IMR-90 (cell line): ENCODE measurements at regions of chr1 and their contacts with region 1.

Region 1: DNA sequence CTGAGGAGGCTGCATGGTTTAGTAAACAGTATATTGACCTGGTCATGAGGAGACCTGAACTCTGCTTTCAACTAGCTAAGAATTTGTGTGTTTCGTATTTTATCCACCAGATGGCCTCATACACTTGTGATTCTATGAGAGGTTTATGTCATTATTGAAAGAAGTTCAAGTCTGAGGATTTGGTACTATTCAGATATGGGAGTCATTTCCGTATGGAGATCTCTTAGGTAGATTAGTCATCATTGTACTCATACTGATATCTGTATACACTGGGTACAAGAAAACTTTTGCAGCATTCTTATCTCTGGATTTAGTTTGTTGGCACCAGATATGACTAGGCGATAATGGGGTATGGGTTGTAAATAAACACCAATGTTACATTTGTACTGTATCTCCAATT is 26.6 kb downstream of the ATF6 start:
- DNase-seq: peak; percentile 93
- ATAC-seq: peak; percentile 92
- H3K4me3 ChIP-seq: no peak overlapping the region
- H3K27ac ChIP-seq: no peak overlapping the region
- H3K4me1 ChIP-seq: peaks cover 4% of the 10 kb centered on the region; the same call in 1 of the 2 replicates
- H3K27me3 ChIP-seq: no peaks in the 10 kb centered on the region
- CTCF ChIP-seq: peak; percentile 76
- POLR2A ChIP-seq: no peak
- RAD21 ChIP-seq: peak; percentile 83

Region 2: GRCh38 chr1:161890574-161890973 is 97.8 kb after region 1 on chr1:
- CTCF ChIA-PET with region 1: no interaction called
- POLR2A ChIA-PET with region 1: no interaction called
- dilution Hi-C with region 1: no loop called
- in situ Hi-C with region 1: no loop called
- intact Hi-C with region 1: no loop called
- DNase-seq: no peak
- ATAC-seq: no peak
- H3K4me3 ChIP-seq: no peak overlapping the region
- H3K27ac ChIP-seq: no peak overlapping the region
- H3K4me1 ChIP-seq: no peaks in the 10 kb centered on the region
- H3K27me3 ChIP-seq: no peaks in the 10 kb centered on the region
- CTCF ChIP-seq: no peak
- POLR2A ChIP-seq: no peak
- RAD21 ChIP-seq: no peak

Region 3: DNA sequence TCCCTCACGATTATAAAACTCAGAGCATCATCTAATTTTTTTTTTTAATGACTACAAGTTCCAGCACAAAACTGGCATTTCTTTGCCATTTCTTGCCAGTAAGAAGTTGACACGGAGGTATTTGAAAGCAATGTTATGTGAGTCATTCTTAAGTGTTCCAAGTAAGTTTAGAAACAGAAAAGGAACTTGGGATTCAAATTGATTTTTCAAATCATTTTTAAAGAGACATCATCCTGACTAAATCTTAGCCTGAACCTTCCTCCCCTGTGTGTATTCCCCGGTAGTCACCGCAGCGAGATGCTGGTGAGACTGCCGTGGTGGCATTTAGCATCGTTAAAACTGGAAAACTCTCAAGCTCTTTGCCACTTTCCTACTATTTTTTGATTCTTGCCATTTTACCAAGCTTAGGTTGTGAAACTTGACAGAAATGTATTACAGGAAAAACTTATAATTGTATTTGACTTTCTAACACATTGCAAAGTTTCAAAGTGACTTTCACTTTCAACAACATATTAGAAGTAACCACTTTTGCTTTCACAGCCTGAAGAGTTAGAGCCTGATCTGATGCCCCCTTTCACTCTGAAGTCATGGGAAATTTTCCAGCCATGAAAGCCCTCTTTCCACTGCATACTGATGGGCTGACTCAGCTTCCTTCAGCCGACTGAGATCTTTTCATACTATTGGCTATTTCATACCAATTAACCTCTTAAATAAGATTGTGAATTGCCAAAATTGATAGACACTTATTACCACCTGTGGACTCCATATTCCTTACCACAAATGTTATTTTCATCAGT is 169.5 kb after region 1 on chr1:
- CTCF ChIA-PET with region 1: no interaction called
- POLR2A ChIA-PET with region 1: no interaction called
- dilution Hi-C with region 1: no loop called
- in situ Hi-C with region 1: no loop called
- intact Hi-C with region 1: loop called (anchors 2 kb)
- DNase-seq: peak; percentile 87
- ATAC-seq: peak; percentile 86
- H3K4me3 ChIP-seq: peak overlapping the region; percentile 42
- H3K27ac ChIP-seq: peak overlapping the region; percentile 90
- H3K4me1 ChIP-seq: peaks cover 9% of the 10 kb centered on the region
- H3K27me3 ChIP-seq: no peaks in the 10 kb centered on the region
- CTCF ChIP-seq: no peak
- POLR2A ChIP-seq: no peak; the same call in 1 of the 2 replicates
- RAD21 ChIP-seq: no peak

Region 4: DNA sequence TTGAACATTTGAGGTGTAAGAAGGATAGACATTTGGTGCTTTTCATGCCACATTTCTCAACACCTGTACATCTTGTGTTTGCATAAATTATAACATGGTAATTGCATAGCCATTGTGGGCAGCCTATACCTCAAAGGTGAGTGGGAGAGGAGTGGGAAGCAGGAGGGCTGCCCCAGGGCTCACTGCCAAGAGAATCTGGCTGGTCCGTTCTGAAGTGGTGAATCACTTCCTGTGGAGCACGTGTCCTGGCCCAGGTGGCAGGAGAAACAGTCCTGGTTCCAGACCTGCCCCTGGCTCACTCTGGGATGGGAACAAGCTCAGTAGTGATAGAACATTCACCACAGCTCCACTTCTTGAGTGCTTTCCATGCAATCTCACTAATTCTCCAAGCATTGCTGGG is 242.5 kb after region 1 on chr1:
- CTCF ChIA-PET with region 1: interaction called, 76 read pairs
- POLR2A ChIA-PET with region 1: interaction called, 7 read pairs
- dilution Hi-C with region 1: no loop called
- in situ Hi-C with region 1: loop called (anchors 5 kb)
- intact Hi-C with region 1: loop called (anchors 1 kb)
- DNase-seq: no peak
- ATAC-seq: no peak
- H3K4me3 ChIP-seq: no peak overlapping the region
- H3K27ac ChIP-seq: no peak overlapping the region
- H3K4me1 ChIP-seq: no peaks in the 10 kb centered on the region
- H3K27me3 ChIP-seq: peaks cover 23% of the 10 kb centered on the region
- CTCF ChIP-seq: no peak
- POLR2A ChIP-seq: no peak
- RAD21 ChIP-seq: no peak

Region 5: DNA sequence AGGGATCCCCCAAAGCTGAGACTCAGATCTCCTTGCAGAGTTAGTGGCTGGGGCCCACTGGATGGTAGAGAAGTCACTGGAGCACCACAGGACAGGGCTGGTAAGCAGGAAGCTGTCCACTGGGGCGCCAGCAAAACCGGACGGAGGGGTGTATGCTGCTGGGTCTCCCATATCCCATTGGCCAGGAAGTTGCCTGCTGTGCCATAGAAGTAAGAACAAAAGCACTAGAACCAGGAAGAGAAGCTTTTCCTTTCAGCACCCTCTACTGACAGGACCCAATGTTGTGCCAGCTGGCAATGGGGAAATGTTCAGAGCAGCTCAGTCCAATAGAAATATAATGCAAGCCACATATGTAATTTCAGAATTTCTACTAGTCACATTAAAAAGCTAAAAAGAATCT is 437.4 kb after region 1 on chr1:
- CTCF ChIA-PET with region 1: no interaction called
- POLR2A ChIA-PET with region 1: no interaction called
- dilution Hi-C with region 1: no loop called
- in situ Hi-C with region 1: loop called (anchors 25 kb)
- intact Hi-C with region 1: no loop called
- DNase-seq: no peak
- ATAC-seq: no peak
- H3K4me3 ChIP-seq: no peak overlapping the region
- H3K27ac ChIP-seq: no peak overlapping the region
- H3K4me1 ChIP-seq: no peaks in the 10 kb centered on the region
- H3K27me3 ChIP-seq: peaks cover 5% of the 10 kb centered on the region
- CTCF ChIP-seq: no peak
- POLR2A ChIP-seq: no peak
- RAD21 ChIP-seq: no peak

Region 6: GRCh38 chr1:162285149-162285561 is 492.4 kb after region 1 on chr1:
- CTCF ChIA-PET with region 1: no interaction called
- POLR2A ChIA-PET with region 1: no interaction called
- dilution Hi-C with region 1: no loop called
- in situ Hi-C with region 1: no loop called
- intact Hi-C with region 1: no loop called
- DNase-seq: no peak
- ATAC-seq: no peak
- H3K4me3 ChIP-seq: no peak overlapping the region
- H3K27ac ChIP-seq: no peak overlapping the region
- H3K4me1 ChIP-seq: no peaks in the 10 kb centered on the region
- H3K27me3 ChIP-seq: peaks cover 23% of the 10 kb centered on the region
- CTCF ChIP-seq: no peak
- POLR2A ChIP-seq: no peak
- RAD21 ChIP-seq: no peak

Region 7: GRCh38 chr1:162391790-162392563 is 599.2 kb after region 1 on chr1:
- CTCF ChIA-PET with region 1: no interaction called
- POLR2A ChIA-PET with region 1: no interaction called
- dilution Hi-C with region 1: no loop called
- in situ Hi-C with region 1: loop called (anchors 25 kb)
- intact Hi-C with region 1: loop called (anchors 10 kb)
- DNase-seq: peak; percentile 58
- ATAC-seq: peak; percentile 93
- H3K4me3 ChIP-seq: no peak overlapping the region
- H3K27ac ChIP-seq: no peak overlapping the region
- H3K4me1 ChIP-seq: no peaks in the 10 kb centered on the region
- H3K27me3 ChIP-seq: peaks cover 27% of the 10 kb centered on the region
- CTCF ChIP-seq: peak; percentile 77
- POLR2A ChIP-seq: no peak
- RAD21 ChIP-seq: peak; percentile 70